ENCODE measurements at regions of chr9 and their contacts with region 1.

Region 1: GRCh38 chr9:93566408-93567270 is 9.7 kb upstream of the PHF2 start:
- DNase-seq: peak; percentile 94 to 100 (median 99)
- ATAC-seq: peak; percentile 99
- H3K4me3 ChIP-seq: peak overlapping the region; percentile 76
- H3K4me3 Mint-ChIP-seq: peak overlapping the region; percentile 80 to 91 (median 86)
- H3K27ac ChIP-seq: peak overlapping the region; percentile 92
- H3K27ac Mint-ChIP-seq: peak overlapping the region; percentile 84 to 96 (median 93)
- H3K4me1 ChIP-seq: peaks cover 8 to 9% of the 10 kb centered on the region in 2 donors
- H3K4me1 Mint-ChIP-seq: peaks cover 10 to 25% (median 20%) of the 10 kb centered on the region in 7 donors
- H3K27me3 ChIP-seq: no peaks in the 10 kb centered on the region
- H3K27me3 Mint-ChIP-seq: no peaks in the 10 kb centered on the region

Region 2: GRCh38 chr9:92877531-92878430 is 688.9 kb before region 1 on chr9 and contains the start of gene ZNF484:
- CTCF ChIA-PET with region 1: no interaction called
- POLR2A ChIA-PET with region 1: no interaction called
- intact Hi-C with region 1: loop called (anchors 1 to 2 kb)
- DNase-seq: peak; percentile 86 to 97 (median 94)
- ATAC-seq: peak; percentile 99
- H3K4me3 ChIP-seq: peak within 1 kb of the TSS; percentile 77
- H3K4me3 Mint-ChIP-seq: peak within 1 kb of the TSS; percentile 91 to 100 (median 99)
- H3K27ac ChIP-seq: peak within 1 kb of the TSS; percentile 90
- H3K27ac Mint-ChIP-seq: peak within 1 kb of the TSS; percentile 94 to 100 (median 99)
- H3K4me1 ChIP-seq: peaks cover 0 to 15% of the 10 kb centered on the region in 2 donors
- H3K4me1 Mint-ChIP-seq: peaks cover 28 to 69% (median 58%) of the 10 kb centered on the region in 7 donors
- H3K27me3 ChIP-seq: no peaks in the 10 kb centered on the region
- H3K27me3 Mint-ChIP-seq: no peaks in the 10 kb centered on the region
- total RNA-seq, gene ZNF484: 12.4 to 25.4 (median 14.0) TPM

Region 3: GRCh38 chr9:93095205-93096130 is 471.2 kb before region 1 on chr9:
- CTCF ChIA-PET with region 1: interaction called, 3 read pairs
- POLR2A ChIA-PET with region 1: no interaction called
- intact Hi-C with region 1: loop called (anchors 1 to 5 kb)
- DNase-seq: peak; percentile 99 to 100 (median 100)
- ATAC-seq: peak; percentile 88
- H3K4me3 ChIP-seq: peak overlapping the region; percentile 72
- H3K4me3 Mint-ChIP-seq: peak overlapping the region; percentile 83 to 95 (median 90)
- H3K27ac ChIP-seq: peak overlapping the region; percentile 93
- H3K27ac Mint-ChIP-seq: peak overlapping the region; percentile 93 to 99 (median 96)
- H3K4me1 ChIP-seq: peaks cover 41 to 58% of the 10 kb centered on the region in 2 donors
- H3K4me1 Mint-ChIP-seq: peaks cover 49 to 81% (median 71%) of the 10 kb centered on the region in 7 donors
- H3K27me3 ChIP-seq: no peaks in the 10 kb centered on the region
- H3K27me3 Mint-ChIP-seq: no peaks in the 10 kb centered on the region

Region 4: GRCh38 chr9:93276968-93277367 is 289.7 kb before region 1 on chr9:
- CTCF ChIA-PET with region 1: no interaction called
- POLR2A ChIA-PET with region 1: no interaction called
- intact Hi-C with region 1: loop called in 1 of 2 experiments (anchors 2 kb)
- DNase-seq: no peak
- ATAC-seq: no peak
- H3K4me3 ChIP-seq: no peak overlapping the region
- H3K4me3 Mint-ChIP-seq: no peak overlapping the region
- H3K27ac ChIP-seq: no peak overlapping the region
- H3K27ac Mint-ChIP-seq: no peak overlapping the region
- H3K4me1 ChIP-seq: no peaks in the 10 kb centered on the region
- H3K4me1 Mint-ChIP-seq: peaks cover 0 to 3% (median under 1%) of the 10 kb centered on the region in 7 donors
- H3K27me3 ChIP-seq: peaks cover 0 to 3% of the 10 kb centered on the region in 2 donors
- H3K27me3 Mint-ChIP-seq: peaks cover 4 to 62% (median 18%) of the 10 kb centered on the region in 5 donors

Region 5: GRCh38 chr9:93501406-93501805 is 65.2 kb before region 1 on chr9:
- CTCF ChIA-PET with region 1: no interaction called
- POLR2A ChIA-PET with region 1: interaction called, 4 read pairs
- intact Hi-C with region 1: loop called in 1 of 2 experiments (anchors 2 kb)
- DNase-seq: peak in 6 of 9 donors; percentile 8 to 37 (median 19)
- ATAC-seq: no peak
- H3K4me3 ChIP-seq: peak overlapping the region; percentile 51
- H3K4me3 Mint-ChIP-seq: peak overlapping the region; percentile 88 to 97 (median 91)
- H3K27ac ChIP-seq: peak overlapping the region; percentile 59
- H3K27ac Mint-ChIP-seq: peak overlapping the region; percentile 83 to 97 (median 91)
- H3K4me1 ChIP-seq: peaks cover 11 to 14% of the 10 kb centered on the region in 2 donors
- H3K4me1 Mint-ChIP-seq: peaks cover 33 to 73% (median 59%) of the 10 kb centered on the region in 7 donors
- H3K27me3 ChIP-seq: no peaks in the 10 kb centered on the region
- H3K27me3 Mint-ChIP-seq: no peaks in the 10 kb centered on the region

Region 6: DNA sequence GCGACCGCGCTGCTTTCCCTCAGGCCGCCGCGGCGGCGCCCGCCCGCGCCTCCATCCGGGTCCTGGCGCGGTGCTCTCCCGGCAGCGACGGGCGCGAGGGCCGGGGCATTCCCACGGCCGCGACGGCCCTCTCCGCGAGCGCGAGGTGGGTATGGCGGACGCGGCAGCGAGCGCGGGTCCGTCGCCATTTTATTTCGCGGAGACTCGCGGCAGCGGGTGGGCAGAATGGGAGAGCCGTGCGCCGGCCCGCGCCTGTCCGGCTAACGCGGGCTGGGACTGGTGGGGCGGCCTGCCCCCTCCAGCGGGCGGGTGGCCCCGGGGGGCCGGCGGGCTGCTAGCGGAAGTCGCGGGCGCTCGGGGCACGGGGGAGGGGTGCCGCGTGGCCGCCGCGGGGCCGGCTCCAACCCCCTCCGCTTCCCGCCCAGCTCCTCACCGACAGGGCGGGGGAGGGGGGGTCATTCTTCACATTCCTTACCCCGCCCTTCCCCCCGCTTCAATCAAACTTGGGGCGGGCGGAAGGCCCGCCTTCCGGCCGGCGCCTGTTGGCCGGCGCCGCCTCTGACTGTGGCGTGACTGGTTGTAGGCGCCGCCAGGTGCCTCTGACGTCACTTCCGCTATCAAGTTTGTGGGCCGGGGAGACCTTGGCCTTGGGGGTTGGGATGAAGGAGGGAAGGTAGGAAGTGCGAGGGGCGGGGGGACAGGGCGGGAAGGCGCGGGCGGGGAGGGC is 599.8 kb after region 1 on chr9:
- CTCF ChIA-PET with region 1: no interaction called
- POLR2A ChIA-PET with region 1: no interaction called
- intact Hi-C with region 1: loop called (anchors 2 to 5 kb)
- DNase-seq: peak; percentile 81 to 96 (median 92)
- ATAC-seq: peak; percentile 72
- H3K4me3 ChIP-seq: peak overlapping the region; percentile 82
- H3K4me3 Mint-ChIP-seq: peak overlapping the region; percentile 84 to 96 (median 88)
- H3K27ac ChIP-seq: peak overlapping the region; percentile 100
- H3K27ac Mint-ChIP-seq: peak overlapping the region; percentile 79 to 97 (median 91)
- H3K4me1 ChIP-seq: peaks cover 37 to 38% of the 10 kb centered on the region in 2 donors
- H3K4me1 Mint-ChIP-seq: peaks cover 33 to 61% (median 58%) of the 10 kb centered on the region in 7 donors
- H3K27me3 ChIP-seq: no peaks in the 10 kb centered on the region
- H3K27me3 Mint-ChIP-seq: no peaks in the 10 kb centered on the region